ENCODE measurements at regions of chr1 and their contacts with region 1.

Region 1: DNA sequence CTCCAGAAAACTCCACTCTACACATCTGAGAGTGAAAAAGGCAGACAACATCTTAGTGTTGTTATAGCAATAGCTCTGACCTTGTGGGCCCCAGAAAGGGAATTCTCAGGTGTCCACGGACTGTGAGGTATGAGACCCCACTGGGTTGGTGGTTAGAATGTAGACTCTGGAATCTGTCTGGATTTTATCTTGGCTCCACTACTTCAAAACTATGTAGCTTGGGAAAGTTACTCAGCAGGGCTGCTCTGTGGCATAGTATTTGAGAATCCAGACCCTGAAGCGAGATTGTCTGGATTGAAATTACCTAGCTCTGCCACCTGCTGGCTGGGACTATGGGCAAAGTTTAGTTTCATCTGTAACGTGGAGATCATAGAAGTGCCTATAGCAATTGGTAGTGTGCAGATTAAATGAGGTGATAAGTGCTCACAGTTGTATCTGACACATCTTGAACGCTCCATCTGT is 25.8 kb downstream of the PRDM2 start:
- DNase-seq: no peak
- ATAC-seq: peak; percentile 36
- H3K4me3 Mint-ChIP-seq: peak overlapping the region; percentile 50
- H3K27ac Mint-ChIP-seq: peak overlapping the region; percentile 97
- H3K4me1 Mint-ChIP-seq: peaks cover 88% of the 10 kb centered on the region
- H3K27me3 Mint-ChIP-seq: no peaks in the 10 kb centered on the region
- CTCF ChIP-seq: no peak

Region 2: GRCh38 chr1:13667691-13668090 is 58.1 kb before region 1 on chr1:
- CTCF ChIA-PET with region 1: interaction called, 107 read pairs
- POLR2A ChIA-PET with region 1: interaction called, 57 read pairs
- intact Hi-C with region 1: loop called (anchors 1 kb)
- DNase-seq: no peak
- ATAC-seq: peak; percentile 75
- H3K4me3 Mint-ChIP-seq: peak overlapping the region; percentile 78
- H3K27ac Mint-ChIP-seq: peak overlapping the region; percentile 95
- H3K4me1 Mint-ChIP-seq: peaks cover 48% of the 10 kb centered on the region
- H3K27me3 Mint-ChIP-seq: no peaks in the 10 kb centered on the region
- CTCF ChIP-seq: no peak

Region 3: GRCh38 chr1:13707164-13707563 is 18.6 kb before region 1 on chr1:
- CTCF ChIA-PET with region 1: interaction called, 29 read pairs
- POLR2A ChIA-PET with region 1: interaction called, 440 read pairs
- intact Hi-C with region 1: loop called (anchors 1 kb)
- DNase-seq: no peak
- ATAC-seq: no peak
- H3K4me3 Mint-ChIP-seq: no peak overlapping the region
- H3K27ac Mint-ChIP-seq: peak overlapping the region; percentile 76
- H3K4me1 Mint-ChIP-seq: peaks cover 97% of the 10 kb centered on the region
- H3K27me3 Mint-ChIP-seq: no peaks in the 10 kb centered on the region
- CTCF ChIP-seq: no peak

Region 4: DNA sequence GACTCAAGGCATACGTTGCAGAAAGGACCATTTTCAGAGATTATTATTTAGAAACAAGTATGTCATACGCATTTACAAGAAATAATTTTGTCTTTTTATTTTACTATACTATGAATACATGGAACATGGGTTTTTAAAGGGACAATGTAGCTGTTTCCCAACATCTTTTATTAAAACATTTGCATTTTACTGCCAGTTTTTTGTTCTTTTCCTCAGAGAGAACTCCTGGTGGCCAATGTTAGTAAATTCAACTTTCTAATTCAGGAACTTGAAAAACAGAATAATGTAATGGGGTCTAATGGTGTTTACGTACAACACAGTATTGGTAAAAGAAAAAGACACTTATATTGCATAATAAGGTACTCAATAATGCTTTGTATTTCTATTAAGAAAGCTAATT is 10.9 kb before region 1 on chr1:
- CTCF ChIA-PET with region 1: interaction called, 34 read pairs
- POLR2A ChIA-PET with region 1: interaction called, 43 read pairs
- intact Hi-C with region 1: loop called (anchors 1 kb)
- DNase-seq: no peak
- ATAC-seq: no peak
- H3K4me3 Mint-ChIP-seq: no peak overlapping the region
- H3K27ac Mint-ChIP-seq: peak overlapping the region; percentile 65
- H3K4me1 Mint-ChIP-seq: peaks cover 78% of the 10 kb centered on the region
- H3K27me3 Mint-ChIP-seq: no peaks in the 10 kb centered on the region
- CTCF ChIP-seq: no peak

Region 5: GRCh38 chr1:13748610-13749505 is 23.1 kb after region 1 on chr1:
- CTCF ChIA-PET with region 1: interaction called, 7 read pairs
- POLR2A ChIA-PET with region 1: interaction called, 51 read pairs
- intact Hi-C with region 1: no loop called
- DNase-seq: peak; percentile 96
- ATAC-seq: peak; percentile 88
- H3K4me3 Mint-ChIP-seq: peak overlapping the region; percentile 85
- H3K27ac Mint-ChIP-seq: peak overlapping the region; percentile 94
- H3K4me1 Mint-ChIP-seq: peaks cover 55% of the 10 kb centered on the region
- H3K27me3 Mint-ChIP-seq: no peaks in the 10 kb centered on the region
- CTCF ChIP-seq: no peak

Region 6: DNA sequence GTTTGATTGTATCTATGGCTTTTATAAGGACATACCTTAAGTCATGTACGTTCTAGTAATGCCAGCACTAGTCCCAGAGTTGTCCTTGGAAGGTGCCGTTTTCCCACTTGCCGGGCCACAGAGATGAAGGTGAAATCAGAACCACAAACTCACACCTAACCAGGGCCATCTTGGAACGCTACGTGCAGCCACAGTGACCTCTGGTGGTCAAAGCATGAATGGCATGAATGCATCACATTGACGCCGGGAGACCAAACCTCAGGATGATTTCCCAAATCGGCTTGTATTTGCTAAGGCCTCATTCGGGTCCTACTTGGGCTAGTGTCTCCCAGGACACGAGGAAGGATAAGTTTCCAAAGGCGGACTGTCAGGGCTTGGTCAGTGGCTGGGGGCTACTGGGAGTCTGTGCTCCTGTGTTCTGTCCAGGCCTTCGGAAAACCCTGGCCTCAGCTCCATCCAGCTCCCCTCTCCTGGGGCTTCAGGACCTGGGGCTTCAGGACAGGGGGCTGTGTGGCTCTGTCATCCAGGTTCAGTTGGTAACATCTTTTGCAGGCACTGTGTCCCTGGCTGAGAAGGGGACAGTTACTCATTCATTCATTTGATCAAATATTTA is 234.7 kb after region 1 on chr1:
- CTCF ChIA-PET with region 1: no interaction called
- POLR2A ChIA-PET with region 1: no interaction called
- intact Hi-C with region 1: loop called (anchors 1 kb)
- DNase-seq: peak; percentile 52
- ATAC-seq: no peak
- H3K4me3 Mint-ChIP-seq: no peak overlapping the region
- H3K27ac Mint-ChIP-seq: no peak overlapping the region
- H3K4me1 Mint-ChIP-seq: no peaks in the 10 kb centered on the region
- H3K27me3 Mint-ChIP-seq: peaks cover 37% of the 10 kb centered on the region
- CTCF ChIP-seq: peak; percentile 94

Region 7: GRCh38 chr1:14140831-14141401 is 415.2 kb after region 1 on chr1:
- CTCF ChIA-PET with region 1: no interaction called
- POLR2A ChIA-PET with region 1: no interaction called
- intact Hi-C with region 1: no loop called
- DNase-seq: no peak
- ATAC-seq: no peak
- H3K4me3 Mint-ChIP-seq: no peak overlapping the region
- H3K27ac Mint-ChIP-seq: no peak overlapping the region
- H3K4me1 Mint-ChIP-seq: no peaks in the 10 kb centered on the region
- H3K27me3 Mint-ChIP-seq: peaks cover 3% of the 10 kb centered on the region
- CTCF ChIP-seq: no peak

Measured in activated B cell treated with CpG ODN at 0.5 μM for 24 hours (primary cell).